Heart right ventricle (tissue), 16 donors: ENCODE measurements at regions of chr15 and their contacts with region 1.

Region 1: GRCh38 chr15:80118956-80119355 is 33.8 kb upstream of the FAH start:
- DNase-seq: no peak
- ATAC-seq: no peak
- H3K4me3 ChIP-seq: no peak overlapping the region
- H3K27ac ChIP-seq: no peak overlapping the region
- H3K4me1 ChIP-seq: peaks cover 0 to 24% (median 7%) of the 10 kb centered on the region in 9 donors
- H3K27me3 ChIP-seq: no peaks in the 10 kb centered on the region
- CTCF ChIP-seq: no peak

Region 2: GRCh38 chr15:79943820-79944219 is 175.1 kb before region 1 on chr15:
- intact Hi-C with region 1: no loop called
- DNase-seq: no peak
- ATAC-seq: no peak
- H3K4me3 ChIP-seq: no peak overlapping the region
- H3K27ac ChIP-seq: no peak overlapping the region
- H3K4me1 ChIP-seq: peaks cover 0 to 17% (median 0%) of the 10 kb centered on the region in 9 donors
- H3K27me3 ChIP-seq: peaks cover 0 to 30% (median 6%) of the 10 kb centered on the region in 7 donors
- CTCF ChIP-seq: no peak

Region 3: GRCh38 chr15:80093854-80094418 is 25.0 kb before region 1 on chr15:
- intact Hi-C with region 1: loop called in 1 of 10 experiments (anchors 1 kb)
- DNase-seq: peak; percentile 29 to 38
- ATAC-seq: peak; percentile 42 to 94 (median 86)
- H3K4me3 ChIP-seq: no peak overlapping the region
- H3K27ac ChIP-seq: peak overlapping the region in 1 of 10 donors; percentile 33
- H3K4me1 ChIP-seq: peaks cover 0 to 45% (median 23%) of the 10 kb centered on the region in 9 donors
- H3K27me3 ChIP-seq: no peaks in the 10 kb centered on the region
- CTCF ChIP-seq: no peak